ENCODE measurements at regions of chr1 and their contacts with region 1.

Region 1: GRCh38 chr1:12636098-12636950 is 7.6 kb upstream of the AADACL4 start:
- DNase-seq: no peak
- H3K4me3 ChIP-seq: no peak overlapping the region
- CTCF ChIP-seq: no peak

Region 2: DNA sequence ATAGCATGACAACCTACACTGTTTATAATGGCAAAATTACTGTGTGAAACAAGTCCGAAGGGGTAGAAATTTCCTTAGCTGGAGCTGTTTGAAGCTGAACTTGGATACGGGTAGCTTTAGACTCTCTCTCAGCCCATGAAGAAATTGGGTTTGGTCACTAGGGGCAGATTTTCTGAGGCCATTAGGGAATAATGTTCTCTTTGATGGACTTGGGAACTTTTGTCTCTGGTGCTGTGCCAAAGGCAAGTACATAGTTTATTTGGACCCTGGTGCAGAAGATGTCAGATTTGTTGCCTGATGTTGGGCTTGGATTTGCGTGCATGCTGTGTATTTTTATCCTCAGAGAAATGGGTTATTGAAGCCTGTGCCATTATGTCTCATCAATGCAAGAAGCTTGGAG is 296.9 kb before region 1 on chr1:
- in situ Hi-C with region 1: loop called (anchors 10 kb)
- DNase-seq: no peak
- H3K4me3 ChIP-seq: no peak overlapping the region
- CTCF ChIP-seq: peak; percentile 26

Region 3: GRCh38 chr1:12528021-12528852 is 108.1 kb before region 1 on chr1:
- in situ Hi-C with region 1: no loop called
- DNase-seq: no peak
- H3K4me3 ChIP-seq: no peak overlapping the region
- CTCF ChIP-seq: no peak

Region 4: GRCh38 chr1:12539705-12540579 is 96.4 kb before region 1 on chr1:
- in situ Hi-C with region 1: no loop called
- DNase-seq: peak; percentile 98
- H3K4me3 ChIP-seq: no peak overlapping the region
- CTCF ChIP-seq: peak; percentile 14

Measured in astrocyte of the cerebellum (primary cell).